Activated CD8-positive, alpha-beta memory T cell treated with anti-CD3 and anti-CD28 coated beads, Interleukin-2, amount 10 ng/mL, durations not matched to agents 7 days and 5 days (primary cell): ENCODE measurements at regions of chr16 and their contacts with region 1.

Region 1: DNA sequence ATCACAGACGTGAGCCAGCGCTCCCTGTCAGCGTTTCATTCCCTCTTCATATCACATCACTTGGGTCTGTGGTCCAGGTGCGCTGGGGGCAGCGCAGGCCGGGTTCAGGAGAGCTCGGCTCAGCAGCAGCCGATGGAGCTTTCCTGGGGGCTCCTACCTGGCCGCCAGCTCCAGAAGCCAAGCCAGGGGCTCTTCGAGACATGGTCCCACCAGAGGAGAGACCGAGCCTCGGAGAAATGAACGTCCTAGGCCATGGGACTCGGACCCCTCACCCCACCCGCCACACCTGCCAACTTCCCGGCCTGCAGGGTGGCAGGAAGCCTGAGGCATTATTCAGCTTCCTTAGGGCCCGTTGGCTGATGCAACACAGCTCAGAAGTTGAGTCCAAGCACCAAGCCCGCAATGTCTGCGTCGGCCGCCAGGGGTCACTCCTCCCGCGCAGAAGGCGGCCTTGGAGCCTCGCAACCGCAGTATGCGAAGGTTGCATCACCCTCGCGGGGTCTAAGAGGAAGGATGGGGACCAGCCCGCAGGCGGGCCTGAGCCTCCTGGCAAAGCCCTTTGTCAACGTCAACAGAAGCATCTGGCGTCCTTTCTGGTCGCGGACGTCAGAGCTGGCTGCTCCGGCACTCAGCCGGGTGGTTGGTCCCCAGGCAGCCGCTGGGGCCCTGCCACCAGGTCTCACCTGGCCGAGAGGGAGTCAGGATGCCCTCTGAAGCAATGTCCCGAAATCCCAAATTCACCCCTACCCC is 13.2 kb upstream of the KLHDC4 start:
- DNase-seq: peak; percentile 97
- ATAC-seq: peak; percentile 79
- H3K4me3 Mint-ChIP-seq: peak overlapping the region; percentile 70
- H3K27ac Mint-ChIP-seq: peak overlapping the region; percentile 98
- H3K4me1 Mint-ChIP-seq: peaks cover 62% of the 10 kb centered on the region
- H3K27me3 Mint-ChIP-seq: peaks cover 2% of the 10 kb centered on the region

Region 2: GRCh38 chr16:87790278-87791032 is 11.4 kb after region 1 on chr16:
- CTCF ChIA-PET with region 1: interaction called, 14 read pairs
- DNase-seq: no peak
- ATAC-seq: no peak
- H3K4me3 Mint-ChIP-seq: no peak overlapping the region
- H3K27ac Mint-ChIP-seq: no peak overlapping the region
- H3K4me1 Mint-ChIP-seq: no peaks in the 10 kb centered on the region
- H3K27me3 Mint-ChIP-seq: no peaks in the 10 kb centered on the region

Region 3: GRCh38 chr16:87824016-87824990 is 45.3 kb after region 1 on chr16:
- CTCF ChIA-PET with region 1: interaction called, 10 read pairs
- DNase-seq: no peak
- ATAC-seq: no peak
- H3K4me3 Mint-ChIP-seq: no peak overlapping the region
- H3K27ac Mint-ChIP-seq: no peak overlapping the region
- H3K4me1 Mint-ChIP-seq: peaks cover 7% of the 10 kb centered on the region
- H3K27me3 Mint-ChIP-seq: no peaks in the 10 kb centered on the region

Region 4: DNA sequence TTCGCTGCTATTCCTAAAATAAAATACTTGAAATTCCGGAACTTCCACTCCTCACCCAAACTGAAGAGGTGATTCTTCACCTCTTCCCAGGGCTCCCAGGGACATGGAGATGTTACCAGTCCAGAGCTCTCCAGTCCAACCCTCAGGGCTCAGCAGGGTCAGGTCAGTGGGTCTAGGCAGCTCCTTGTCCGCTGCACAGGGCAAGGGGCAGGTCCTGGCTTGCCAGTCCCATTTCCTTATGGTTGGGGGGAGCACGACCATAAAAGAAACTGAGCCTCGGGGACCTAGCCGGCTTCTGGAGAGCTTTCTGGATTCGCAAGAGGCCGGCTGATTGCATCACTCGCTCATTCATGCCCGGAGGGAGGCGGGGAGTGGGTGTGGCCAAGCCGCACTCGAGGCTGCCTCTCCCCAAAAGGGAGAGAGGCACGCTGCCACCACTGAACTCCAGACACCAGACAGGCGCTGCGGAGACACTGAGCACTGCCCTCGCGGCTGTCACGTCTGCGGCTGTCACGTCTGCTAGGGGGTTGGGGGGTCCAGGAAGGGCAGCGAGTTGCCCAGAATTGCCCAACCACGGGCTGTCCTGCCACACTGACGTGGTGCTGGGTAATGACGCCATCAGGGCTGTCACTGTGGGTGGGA is 74.5 kb after region 1 on chr16:
- CTCF ChIA-PET with region 1: interaction called, 113 read pairs
- DNase-seq: peak; percentile 92
- ATAC-seq: peak; percentile 51
- H3K4me3 Mint-ChIP-seq: peak overlapping the region; percentile 30
- H3K27ac Mint-ChIP-seq: peak overlapping the region; percentile 87
- H3K4me1 Mint-ChIP-seq: peaks cover 62% of the 10 kb centered on the region
- H3K27me3 Mint-ChIP-seq: no peaks in the 10 kb centered on the region

Region 5: DNA sequence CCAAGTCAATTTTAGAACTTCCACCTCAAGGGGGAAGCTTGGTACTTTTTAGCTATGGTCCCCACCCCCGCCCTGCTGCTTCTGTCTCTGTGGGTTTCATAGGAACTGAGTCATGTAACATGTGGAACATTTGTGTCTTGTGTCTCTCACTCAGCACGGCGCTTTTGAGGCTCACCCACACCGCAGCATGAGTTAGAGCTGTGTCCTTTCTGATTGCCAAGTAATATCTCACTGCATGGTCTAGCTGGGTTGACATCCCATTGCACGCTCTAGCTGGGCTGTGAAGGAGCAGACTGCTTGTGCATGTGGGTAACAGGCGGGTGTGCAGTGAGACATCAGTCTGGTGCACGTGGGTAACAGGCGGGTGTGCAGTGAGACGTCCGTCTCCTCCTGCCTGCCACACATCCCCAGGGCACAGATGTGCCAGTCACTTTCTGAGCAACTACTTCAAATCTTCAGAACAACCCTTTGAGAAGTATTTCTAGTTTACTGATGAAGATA is 116.7 kb after region 1 on chr16:
- CTCF ChIA-PET with region 1: interaction called, 74 read pairs
- DNase-seq: peak; percentile 98
- ATAC-seq: peak; percentile 88
- H3K4me3 Mint-ChIP-seq: peak overlapping the region; percentile 40
- H3K27ac Mint-ChIP-seq: peak overlapping the region; percentile 98
- H3K4me1 Mint-ChIP-seq: peaks cover 48% of the 10 kb centered on the region
- H3K27me3 Mint-ChIP-seq: no peaks in the 10 kb centered on the region